ENCODE measurements at regions of chr10 and their contacts with region 1.

Region 1: GRCh38 chr10:25080880-25081581 is 64.6 kb downstream of the THNSL1 start:
- DNase-seq: peak; percentile 68 to 88 (median 86)
- ATAC-seq: peak; percentile 88 to 98 (median 96)
- H3K4me3 ChIP-seq: peak overlapping the region in 1 of 12 donors; percentile 22
- H3K27ac ChIP-seq: peak overlapping the region in 8 of 12 donors; percentile 23 to 68 (median 53)
- H3K4me1 ChIP-seq: peaks cover 0 to 26% (median 8%) of the 10 kb centered on the region in 12 donors
- H3K27me3 ChIP-seq: no peaks in the 10 kb centered on the region
- CTCF ChIP-seq: peak; percentile 82 to 97 (median 90)
- POLR2A ChIP-seq: no peak

Region 2: DNA sequence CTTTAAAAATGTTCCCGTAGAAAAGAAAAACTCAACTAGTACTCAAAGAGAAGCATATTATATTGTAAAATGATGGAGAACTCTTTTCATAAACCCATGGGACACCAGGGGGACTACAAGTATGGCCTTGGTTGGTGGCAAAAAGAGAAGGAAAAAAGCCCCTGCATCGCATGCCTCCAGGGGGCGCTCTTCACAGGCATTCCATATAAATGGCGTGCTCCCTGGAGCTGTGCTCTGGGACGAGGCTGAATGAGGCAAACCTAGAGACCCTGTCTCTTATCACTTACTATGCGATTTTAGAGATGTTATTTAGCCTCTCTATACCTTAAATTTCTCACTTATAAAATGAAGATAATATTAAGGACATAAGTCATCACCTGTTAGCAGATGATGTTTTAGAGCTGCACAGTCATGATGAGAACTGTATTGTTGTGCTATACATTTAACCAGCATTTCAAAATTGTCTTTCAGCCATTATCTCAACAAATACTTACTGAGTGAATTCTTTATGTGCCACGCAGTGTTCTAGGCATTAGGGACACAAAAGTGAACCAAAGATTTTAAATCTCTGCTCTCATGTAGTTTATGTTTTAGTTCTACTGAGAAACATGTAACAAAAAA is 463.1 kb before region 1 on chr10:
- intact Hi-C with region 1: loop called in 3 of 10 experiments (anchors 2 to 5 kb)
- DNase-seq: peak; percentile 22 to 69 (median 59)
- ATAC-seq: peak; percentile 53 to 71 (median 67)
- H3K4me3 ChIP-seq: no peak overlapping the region
- H3K27ac ChIP-seq: no peak overlapping the region
- H3K4me1 ChIP-seq: peaks cover 0 to 11% (median 5%) of the 10 kb centered on the region in 12 donors
- H3K27me3 ChIP-seq: no peaks in the 10 kb centered on the region
- CTCF ChIP-seq: peak; percentile 71 to 93 (median 81)
- POLR2A ChIP-seq: no peak

Region 3: GRCh38 chr10:25016376-25017154 is 64.5 kb before region 1 on chr10 and contains the start of gene THNSL1:
- intact Hi-C with region 1: loop called in 3 of 10 experiments (anchors 2 to 5 kb)
- DNase-seq: peak; percentile 99 to 100 (median 99)
- ATAC-seq: peak; percentile 100
- H3K4me3 ChIP-seq: peak within 1 kb of the TSS; percentile 41 to 80 (median 68)
- H3K27ac ChIP-seq: peak within 1 kb of the TSS; percentile 72 to 98 (median 92)
- H3K4me1 ChIP-seq: peaks cover 0 to 23% (median 9%) of the 10 kb centered on the region in 12 donors
- H3K27me3 ChIP-seq: no peaks in the 10 kb centered on the region
- CTCF ChIP-seq: no peak
- POLR2A ChIP-seq: peak in 1 of 2 donors; percentile 70
- total RNA-seq, gene THNSL1: 1.9 to 6.9 (median 4.1) TPM

Region 4: DNA sequence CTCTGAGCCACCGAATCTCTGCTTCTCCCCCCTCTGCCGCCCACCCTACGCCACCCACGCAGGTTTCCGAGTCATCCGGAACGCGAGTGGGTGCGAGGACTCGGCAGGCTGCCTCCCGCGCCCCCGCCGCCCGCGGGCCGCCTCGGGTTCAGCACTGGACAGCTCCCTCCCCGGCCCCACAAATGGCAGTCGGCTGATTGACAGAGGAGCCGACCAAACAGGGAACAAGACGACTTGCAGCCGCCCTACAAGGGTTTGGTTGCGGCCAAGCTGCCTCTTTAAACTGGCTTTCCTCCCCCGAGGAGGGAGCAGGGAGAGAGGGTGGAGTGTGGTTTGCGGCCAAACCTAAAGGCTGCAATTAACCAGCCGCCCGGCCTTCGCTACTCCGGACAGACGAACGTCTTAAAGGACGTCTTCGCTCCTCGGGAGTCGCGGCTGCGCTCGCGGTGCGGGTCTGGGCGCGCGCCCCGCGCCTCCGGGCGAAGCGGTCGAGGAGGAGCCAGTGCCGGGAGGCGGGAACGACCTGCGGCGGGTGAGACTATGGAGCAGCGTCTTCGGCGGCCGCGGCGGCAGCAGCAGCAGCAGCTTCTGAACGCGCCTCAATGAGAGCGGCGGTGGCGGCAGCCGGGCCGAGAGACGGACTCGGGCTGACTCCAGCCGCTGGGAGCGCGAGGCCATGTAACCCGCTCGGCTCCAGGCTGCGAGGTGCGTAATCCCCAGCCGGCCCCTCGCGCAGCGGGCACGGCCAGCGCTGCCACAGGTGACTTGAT is 93.6 kb after region 1 on chr10 and contains the start of gene GPR158:
- intact Hi-C with region 1: no loop called
- DNase-seq: peak; percentile 87 to 91 (median 90)
- ATAC-seq: peak; percentile 86 to 98 (median 96)
- H3K4me3 ChIP-seq: peak within 1 kb of the TSS; percentile 22 to 66 (median 52)
- H3K27ac ChIP-seq: no peak within 1 kb of the TSS
- H3K4me1 ChIP-seq: peaks cover 0 to 25% (median 7%) of the 10 kb centered on the region in 12 donors
- H3K27me3 ChIP-seq: peaks cover 19 to 76% (median 44%) of the 10 kb centered on the region in 9 donors
- CTCF ChIP-seq: no peak
- POLR2A ChIP-seq: no peak
- total RNA-seq, gene GPR158: 0.05 TPM in 2 of 9 donors, not detected in the others

Measured in heart left ventricle (tissue), 16 donors.